Activated naive CD4-positive, alpha-beta T cell treated with anti-CD3 and anti-CD28 coated beads, Interleukin-2, amount 10 ng/mL, durations not matched to agents 7 days and 5 days (primary cell): ENCODE measurements at regions of chrX and their contacts with region 1.

Region 1: DNA sequence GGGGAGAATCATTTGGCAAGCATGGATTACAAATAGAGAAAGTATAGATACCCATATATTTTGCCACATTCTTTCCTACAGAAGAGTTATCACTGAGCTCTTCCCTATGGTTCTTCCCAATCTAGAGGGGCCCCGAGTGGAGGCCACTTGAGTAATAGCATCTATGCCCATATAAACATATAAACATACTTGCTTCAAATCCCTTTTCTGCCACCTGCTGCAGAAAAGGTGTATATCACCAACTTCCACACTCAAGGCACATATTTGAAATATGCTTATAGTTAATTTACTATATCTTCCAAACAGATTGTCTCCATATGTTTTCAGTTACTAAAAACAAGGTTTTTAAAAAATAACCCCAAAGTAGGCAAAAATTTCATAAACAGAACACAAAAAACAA is 642.8 kb upstream of the DIPK2B start:
- DNase-seq: peak; percentile 33
- H3K4me3 Mint-ChIP-seq: no peak overlapping the region
- H3K27ac Mint-ChIP-seq: peak overlapping the region; percentile 16
- H3K4me1 Mint-ChIP-seq: peaks cover 40% of the 10 kb centered on the region
- H3K27me3 Mint-ChIP-seq: no peaks in the 10 kb centered on the region

Region 2: GRCh38 chrX:45515262-45516215 is 328.0 kb before region 1 on chrX:
- CTCF ChIA-PET with region 1: interaction called, 12 read pairs
- DNase-seq: peak; percentile 53
- H3K4me3 Mint-ChIP-seq: no peak overlapping the region
- H3K27ac Mint-ChIP-seq: no peak overlapping the region
- H3K4me1 Mint-ChIP-seq: peaks cover 4% of the 10 kb centered on the region
- H3K27me3 Mint-ChIP-seq: no peaks in the 10 kb centered on the region

Region 3: GRCh38 chrX:45722471-45722870 is 121.0 kb before region 1 on chrX:
- CTCF ChIA-PET with region 1: no interaction called
- DNase-seq: no peak
- H3K4me3 Mint-ChIP-seq: no peak overlapping the region
- H3K27ac Mint-ChIP-seq: no peak overlapping the region
- H3K4me1 Mint-ChIP-seq: peaks cover 4% of the 10 kb centered on the region
- H3K27me3 Mint-ChIP-seq: no peaks in the 10 kb centered on the region

Region 4: DNA sequence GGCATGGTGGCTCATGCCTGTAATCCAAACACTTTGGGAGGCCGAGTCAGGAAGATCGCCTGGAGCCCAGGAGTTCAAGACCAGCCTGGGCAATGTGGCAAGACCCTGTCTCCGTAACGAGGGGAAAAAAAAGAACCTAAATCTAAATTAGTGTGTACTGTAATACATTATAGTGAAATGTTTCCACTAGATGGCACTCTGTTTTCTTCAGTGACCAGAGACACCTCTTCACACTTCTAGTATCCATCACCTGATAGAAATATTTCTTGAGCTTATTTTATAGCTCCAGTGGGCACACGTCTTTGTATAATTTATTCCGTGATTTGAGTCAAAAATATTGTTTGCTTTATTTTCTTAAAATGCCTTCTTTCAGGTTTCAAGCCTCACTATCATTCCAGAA is 42.0 kb before region 1 on chrX:
- CTCF ChIA-PET with region 1: interaction called, 15 read pairs
- DNase-seq: no peak
- H3K4me3 Mint-ChIP-seq: no peak overlapping the region
- H3K27ac Mint-ChIP-seq: peak overlapping the region; percentile 68
- H3K4me1 Mint-ChIP-seq: peaks cover 79% of the 10 kb centered on the region
- H3K27me3 Mint-ChIP-seq: no peaks in the 10 kb centered on the region

Region 5: DNA sequence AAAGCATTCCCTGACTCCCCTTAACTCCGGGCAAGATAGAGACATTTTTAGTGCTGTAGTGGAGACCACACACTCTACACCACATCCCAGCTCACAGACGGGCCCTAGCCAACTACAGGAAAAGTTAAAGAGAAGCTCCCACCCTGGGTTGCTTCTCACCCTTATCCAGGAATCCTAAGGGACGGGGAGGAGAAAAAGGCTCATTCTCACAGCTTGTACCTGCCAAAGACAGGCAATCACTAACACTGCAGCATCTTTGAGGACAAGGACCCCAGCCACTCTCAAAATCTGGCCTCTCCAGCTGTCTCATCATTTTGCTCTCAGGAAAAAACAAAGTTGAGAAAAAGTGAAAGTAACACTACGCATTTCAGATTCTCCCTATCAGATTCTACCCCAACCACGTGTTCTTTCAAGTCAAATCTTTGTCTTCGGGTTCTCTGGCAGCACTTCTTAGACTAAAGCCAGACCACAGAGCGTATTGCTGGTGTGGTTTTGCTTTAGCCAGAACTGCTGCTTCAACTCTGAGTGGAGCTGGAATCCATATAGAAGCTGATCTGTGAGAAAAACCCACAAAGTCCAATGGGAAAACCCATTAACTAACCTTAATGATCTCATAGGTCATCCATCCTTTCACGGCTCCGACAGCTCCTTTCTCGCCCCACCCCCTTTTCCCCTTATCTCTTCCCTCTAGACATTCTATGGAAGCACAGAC is 37.0 kb before region 1 on chrX:
- CTCF ChIA-PET with region 1: interaction called, 15 read pairs
- DNase-seq: peak; percentile 68
- H3K4me3 Mint-ChIP-seq: peak overlapping the region; percentile 70
- H3K27ac Mint-ChIP-seq: peak overlapping the region; percentile 97
- H3K4me1 Mint-ChIP-seq: peaks cover 85% of the 10 kb centered on the region
- H3K27me3 Mint-ChIP-seq: no peaks in the 10 kb centered on the region